ENCODE measurements at regions of chr11 and their contacts with region 1.

Region 1: GRCh38 chr11:48210052-48210451 is 6.6 kb upstream of the OR4B1 start:
- DNase-seq: no peak
- ATAC-seq: no peak
- H3K4me3 ChIP-seq: no peak overlapping the region
- H3K27ac ChIP-seq: no peak overlapping the region
- H3K4me1 ChIP-seq: no peaks in the 10 kb centered on the region
- H3K27me3 ChIP-seq: no peaks in the 10 kb centered on the region
- CTCF ChIP-seq: no peak
- POLR2A ChIP-seq: no peak

Region 2: GRCh38 chr11:47847892-47848635 is 362.0 kb before region 1 on chr11 and contains the start of gene NUP160:
- in situ Hi-C with region 1: no loop called
- intact Hi-C with region 1: no loop called
- DNase-seq: peak; percentile 65 to 72
- ATAC-seq: peak; percentile 76 to 78
- H3K4me3 ChIP-seq: peak within 1 kb of the TSS; percentile 74 to 98 (median 92)
- H3K27ac ChIP-seq: peak within 1 kb of the TSS; percentile 91 to 94 (median 92)
- H3K4me1 ChIP-seq: peaks cover 38 to 42% of the 10 kb centered on the region in 2 donors
- H3K27me3 ChIP-seq: no peaks in the 10 kb centered on the region
- CTCF ChIP-seq: peak in 1 of 5 experiments; percentile 15
- POLR2A ChIP-seq: peak; percentile 64 to 65
- total RNA-seq, gene NUP160: 8.1 to 11.4 (median 9.9) TPM

Region 3: DNA sequence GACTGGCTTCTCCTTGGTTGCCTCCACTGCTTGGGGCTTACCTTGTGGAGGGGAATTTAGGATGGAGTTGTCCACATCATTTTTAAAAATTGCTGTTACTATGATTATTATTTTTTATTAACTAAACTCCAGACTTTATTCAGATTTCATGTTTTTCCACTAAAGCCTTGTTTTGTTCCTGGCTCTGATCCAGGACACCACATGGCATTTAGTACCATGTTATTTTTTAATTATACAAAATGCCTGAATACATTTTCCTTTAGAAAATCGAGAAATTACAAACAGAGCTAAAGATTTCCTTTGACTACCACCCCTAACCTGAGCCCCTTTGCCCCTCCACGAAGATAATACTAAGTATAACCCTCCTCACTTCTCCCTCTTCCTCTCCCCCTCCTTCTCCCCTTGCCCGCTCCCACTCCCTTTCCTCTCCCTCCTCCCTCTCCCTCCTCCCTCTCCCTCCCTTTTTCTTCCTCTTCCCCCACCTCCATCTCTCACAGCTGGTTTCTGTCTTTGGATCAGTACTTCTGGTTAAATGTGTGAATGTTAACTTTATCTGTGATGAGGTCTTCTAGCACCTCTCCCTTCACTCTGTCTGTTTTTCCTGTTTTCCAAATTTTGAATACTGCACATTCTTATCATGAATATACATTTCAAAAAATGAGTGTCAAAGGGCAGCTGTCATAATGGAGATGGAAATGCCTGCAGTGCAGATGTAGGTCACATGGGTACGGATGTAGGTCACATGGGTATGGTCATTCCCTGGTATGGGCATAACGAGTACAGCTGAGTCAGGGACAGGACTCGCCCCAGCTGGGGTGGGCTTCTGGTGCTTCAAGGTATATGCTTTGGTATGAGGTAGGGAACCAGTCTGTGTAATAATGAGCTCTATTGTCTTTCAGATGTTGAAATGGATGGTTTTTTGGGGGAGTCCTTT is 47.8 kb before region 1 on chr11:
- in situ Hi-C with region 1: no loop called
- intact Hi-C with region 1: no loop called
- DNase-seq: no peak
- ATAC-seq: no peak
- H3K4me3 ChIP-seq: no peak overlapping the region
- H3K27ac ChIP-seq: no peak overlapping the region
- H3K4me1 ChIP-seq: no peaks in the 10 kb centered on the region
- H3K27me3 ChIP-seq: no peaks in the 10 kb centered on the region
- CTCF ChIP-seq: no peak
- POLR2A ChIP-seq: no peak

Region 4: GRCh38 chr11:48244804-48245203 is 34.8 kb after region 1 on chr11 and contains the start of gene OR4X2:
- in situ Hi-C with region 1: no loop called
- intact Hi-C with region 1: loop called (anchors 2 kb)
- DNase-seq: no peak
- ATAC-seq: no peak
- H3K4me3 ChIP-seq: no peak within 1 kb of the TSS
- H3K27ac ChIP-seq: no peak within 1 kb of the TSS
- H3K4me1 ChIP-seq: no peaks in the 10 kb centered on the region
- H3K27me3 ChIP-seq: no peaks in the 10 kb centered on the region
- CTCF ChIP-seq: no peak
- POLR2A ChIP-seq: no peak
- total RNA-seq, gene OR4X2: not detected

Measured in gastrocnemius medialis (tissue), 4 donors.